CD14-positive monocyte (primary cell): ENCODE measurements at regions of chr20 and their contacts with region 1.

Region 1: DNA sequence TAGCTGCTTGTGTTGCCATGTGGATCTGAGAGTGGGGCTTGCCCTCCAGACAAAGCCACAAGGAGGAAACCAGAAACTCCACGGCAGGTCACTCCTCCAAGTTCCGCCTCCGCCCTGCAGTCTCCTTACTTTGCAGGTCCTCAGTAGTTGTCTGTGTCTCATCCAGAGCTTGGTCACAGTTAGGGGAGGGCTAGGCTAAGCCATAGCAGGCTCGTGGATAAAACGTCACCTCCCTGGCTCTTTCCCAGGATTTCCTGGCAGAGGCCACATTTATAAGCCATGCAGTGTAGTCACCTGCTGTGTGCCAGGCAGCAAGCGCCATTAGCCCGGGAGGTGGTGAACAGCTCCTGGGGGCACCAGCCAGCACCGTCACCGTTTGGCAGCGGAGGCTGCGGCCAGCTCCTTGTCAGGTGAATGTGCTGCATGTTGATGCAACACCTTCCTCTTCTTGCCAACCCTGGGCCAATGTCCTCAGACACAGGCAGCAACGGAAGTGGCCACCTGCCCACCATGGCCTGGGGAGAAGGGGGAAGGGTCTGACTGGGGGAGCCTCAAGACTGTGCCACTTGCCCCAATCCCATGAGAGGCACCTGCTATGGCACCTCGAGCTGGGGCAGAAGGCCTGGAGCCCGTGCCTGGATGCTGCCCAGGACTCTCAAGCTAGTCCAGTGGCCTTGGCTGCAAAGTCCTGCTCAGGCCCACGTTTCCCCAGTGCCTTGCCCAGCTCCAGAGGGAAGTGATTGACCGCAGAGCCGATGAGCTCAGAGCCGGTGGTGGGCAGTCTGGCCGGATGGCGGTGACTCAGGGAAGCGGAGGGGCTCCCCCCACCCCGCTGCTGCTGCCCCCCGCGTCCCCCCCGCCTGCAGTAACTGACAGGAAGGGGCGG is 39.0 kb upstream of the SLCO4A1 start:
- DNase-seq: peak; percentile 96 to 98 (median 96)
- H3K4me3 ChIP-seq: peak overlapping the region in 2 of 3 experiments; percentile 14 to 65
- H3K4me3 Mint-ChIP-seq: peak overlapping the region; percentile 69 to 89
- H3K27ac ChIP-seq: peak overlapping the region; percentile 96 to 99
- H3K27ac Mint-ChIP-seq: peak overlapping the region; percentile 97 to 99 (median 98)
- H3K4me1 ChIP-seq: peaks cover 86 to 96% of the 10 kb centered on the region in 2 donors
- H3K4me1 Mint-ChIP-seq: peaks cover 90% of the 10 kb centered on the region
- H3K27me3 ChIP-seq: no peaks in the 10 kb centered on the region
- H3K27me3 Mint-ChIP-seq: peaks cover 0 to 4% (median 0%) of the 10 kb centered on the region in 3 donors
- CTCF ChIP-seq: no peak

Region 2: DNA sequence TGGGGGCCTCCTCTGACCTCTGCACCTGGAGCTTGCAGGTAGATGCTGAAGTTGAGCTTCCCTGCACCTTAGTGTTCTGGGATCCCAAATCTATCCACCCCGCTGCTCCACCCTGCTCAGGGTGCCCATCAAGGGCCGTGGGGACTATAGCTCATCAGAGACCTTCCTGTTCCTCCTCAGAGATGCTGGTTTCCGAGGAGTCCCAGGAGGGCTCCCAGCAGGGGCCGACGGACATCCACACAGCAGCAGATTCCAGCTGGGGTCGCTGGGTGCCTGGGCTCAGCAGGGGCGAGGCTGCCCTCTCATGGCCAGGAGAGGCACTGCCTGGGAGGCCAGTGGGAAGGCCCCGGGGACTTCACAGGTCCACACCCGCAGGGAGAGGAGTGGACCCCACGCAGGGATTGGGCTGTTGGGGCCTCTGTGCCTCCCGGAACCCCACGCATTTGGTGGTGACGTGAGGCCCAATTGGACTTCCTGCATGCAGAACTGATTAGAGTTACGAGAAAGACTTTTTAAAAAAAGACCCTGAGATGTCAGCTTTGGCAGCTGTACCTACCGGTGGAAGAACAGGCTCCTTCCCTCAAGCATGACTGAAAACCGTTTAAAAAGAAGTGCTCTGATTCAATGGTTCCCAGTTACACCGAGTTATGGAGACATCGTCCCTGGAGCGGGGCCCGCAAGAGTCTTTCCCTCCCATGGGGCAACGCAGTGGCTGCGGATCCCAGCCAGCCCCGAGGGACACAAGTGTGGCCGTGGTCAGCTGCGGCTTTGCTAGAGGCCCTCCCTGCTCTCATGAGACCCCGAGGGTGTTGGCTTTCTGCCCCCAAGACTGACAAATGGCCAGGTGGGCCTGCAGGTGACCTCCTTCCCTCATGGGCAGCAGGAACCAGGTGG is 13.7 kb after region 1 on chr20:
- intact Hi-C with region 1: loop called in 1 of 2 experiments (anchors 2 kb)
- DNase-seq: peak; percentile 73 to 85 (median 83)
- H3K4me3 ChIP-seq: peak overlapping the region in 1 of 3 experiments; percentile 34
- H3K4me3 Mint-ChIP-seq: peak overlapping the region in 1 of 2 donors; percentile 71
- H3K27ac ChIP-seq: peak overlapping the region; percentile 93
- H3K27ac Mint-ChIP-seq: peak overlapping the region; percentile 94 to 98 (median 95)
- H3K4me1 ChIP-seq: peaks cover 31 to 34% of the 10 kb centered on the region in 2 donors
- H3K4me1 Mint-ChIP-seq: peaks cover 35% of the 10 kb centered on the region
- H3K27me3 ChIP-seq: no peaks in the 10 kb centered on the region
- H3K27me3 Mint-ChIP-seq: peaks cover 0 to 1% (median 0%) of the 10 kb centered on the region in 3 donors
- CTCF ChIP-seq: peak; percentile 97

Region 3: DNA sequence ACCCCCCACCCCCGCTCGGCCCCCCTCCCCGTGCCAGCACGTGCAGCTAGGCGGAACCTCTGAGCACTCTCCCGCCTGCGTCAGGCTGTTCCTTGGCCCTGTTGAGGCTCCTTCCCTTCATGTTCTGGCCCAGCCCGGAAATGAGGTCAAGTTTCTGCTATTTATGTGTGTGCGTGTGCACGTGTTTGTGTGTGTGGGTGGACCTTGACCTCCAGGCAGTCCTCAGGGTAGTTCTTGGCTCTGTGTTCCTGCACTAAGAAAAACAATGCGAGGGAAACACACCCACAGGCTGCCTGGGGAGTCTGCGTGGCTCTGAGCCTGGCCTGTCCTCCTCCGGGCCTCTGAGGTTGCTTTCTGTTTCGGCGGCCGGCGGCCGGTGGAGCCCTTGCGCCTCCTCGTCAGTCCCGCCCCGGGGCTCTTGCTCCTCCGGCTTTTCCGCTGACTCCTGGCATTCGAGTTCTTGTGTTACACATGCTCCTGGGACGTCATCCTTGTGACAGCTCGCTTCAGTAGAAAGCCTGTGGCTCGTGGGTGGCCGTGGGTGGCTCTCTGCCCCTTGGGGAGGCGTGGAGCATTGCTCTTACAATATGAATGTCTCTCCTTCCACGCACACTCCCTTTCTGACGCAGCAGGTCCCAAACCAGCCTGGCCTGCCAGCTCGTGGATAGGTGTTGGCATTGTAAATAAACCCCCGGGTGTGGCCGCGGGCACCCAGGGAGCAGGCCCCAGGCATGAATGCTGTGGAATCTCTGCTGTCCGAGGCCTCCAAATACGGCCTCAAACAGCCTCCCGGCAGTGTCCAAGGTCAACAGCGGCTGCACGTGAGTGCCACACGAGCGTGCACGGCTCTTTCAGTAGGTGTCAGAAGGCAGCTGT is 49.0 kb after region 1 on chr20:
- intact Hi-C with region 1: loop called in 1 of 2 experiments (anchors 10 kb)
- DNase-seq: peak; percentile 89 to 95 (median 93)
- H3K4me3 ChIP-seq: peak overlapping the region in 2 of 3 experiments; percentile 15 to 57
- H3K4me3 Mint-ChIP-seq: peak overlapping the region; percentile 59 to 82
- H3K27ac ChIP-seq: peak overlapping the region; percentile 94 to 96
- H3K27ac Mint-ChIP-seq: peak overlapping the region; percentile 95 to 98 (median 97)
- H3K4me1 ChIP-seq: peaks cover 24 to 29% of the 10 kb centered on the region in 2 donors
- H3K4me1 Mint-ChIP-seq: peaks cover 30% of the 10 kb centered on the region
- H3K27me3 ChIP-seq: no peaks in the 10 kb centered on the region
- H3K27me3 Mint-ChIP-seq: peaks cover 0 to 9% (median 2%) of the 10 kb centered on the region in 3 donors
- CTCF ChIP-seq: peak; percentile 27

Region 4: DNA sequence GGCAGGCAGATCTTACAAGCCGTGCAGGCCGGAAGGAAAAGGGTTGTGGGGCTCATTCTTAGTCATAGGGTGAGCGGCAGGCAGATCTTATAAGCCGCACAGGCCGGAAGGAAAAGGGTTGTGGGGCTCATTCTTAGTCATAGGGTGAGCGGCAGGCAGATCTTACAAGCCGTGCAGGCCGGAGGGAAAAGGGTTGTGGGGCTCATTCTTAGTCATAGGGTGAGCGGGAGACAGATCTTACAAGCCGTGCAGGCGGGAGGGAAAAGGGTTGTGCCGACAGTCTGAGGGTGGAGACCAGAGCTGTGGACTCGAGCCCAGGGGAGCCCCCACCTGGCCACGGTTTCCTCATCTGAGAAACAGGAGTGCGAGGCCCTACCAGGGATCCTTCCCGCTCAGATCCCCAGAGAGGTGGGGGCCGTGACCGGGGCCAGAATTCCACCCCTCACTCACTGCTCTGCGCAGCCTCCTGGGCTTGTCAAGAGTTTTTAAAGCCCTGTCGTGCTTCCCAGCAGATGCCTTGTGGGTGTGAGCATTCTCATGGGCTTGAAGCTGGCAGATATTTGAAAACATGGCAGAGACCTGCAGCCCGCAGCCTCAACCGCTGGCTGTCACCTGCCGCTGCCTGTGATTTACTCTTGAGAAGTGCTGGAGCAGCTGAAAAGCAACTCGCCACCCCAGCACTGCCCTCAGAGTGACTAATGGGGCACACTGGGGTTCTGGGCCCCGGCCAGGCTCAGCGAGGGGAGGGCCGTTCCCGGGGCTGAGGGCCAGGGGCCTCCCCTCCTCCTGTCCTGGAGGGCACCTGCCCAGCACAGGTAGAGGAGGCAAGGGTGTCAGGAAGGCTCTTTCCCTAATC is 137.2 kb after region 1 on chr20:
- intact Hi-C with region 1: loop called in 1 of 2 experiments (anchors 1 kb)
- DNase-seq: peak; percentile 92 to 99 (median 96)
- H3K4me3 ChIP-seq: peak overlapping the region in 2 of 3 experiments; percentile 10 to 72
- H3K4me3 Mint-ChIP-seq: peak overlapping the region; percentile 68 to 77
- H3K27ac ChIP-seq: peak overlapping the region; percentile 93 to 99
- H3K27ac Mint-ChIP-seq: peak overlapping the region; percentile 94 to 99 (median 97)
- H3K4me1 ChIP-seq: peaks cover 41 to 65% of the 10 kb centered on the region in 2 donors
- H3K4me1 Mint-ChIP-seq: peaks cover 57% of the 10 kb centered on the region
- H3K27me3 ChIP-seq: no peaks in the 10 kb centered on the region
- H3K27me3 Mint-ChIP-seq: peaks cover 1 to 7% (median 2%) of the 10 kb centered on the region in 3 donors
- CTCF ChIP-seq: no peak

Region 5: DNA sequence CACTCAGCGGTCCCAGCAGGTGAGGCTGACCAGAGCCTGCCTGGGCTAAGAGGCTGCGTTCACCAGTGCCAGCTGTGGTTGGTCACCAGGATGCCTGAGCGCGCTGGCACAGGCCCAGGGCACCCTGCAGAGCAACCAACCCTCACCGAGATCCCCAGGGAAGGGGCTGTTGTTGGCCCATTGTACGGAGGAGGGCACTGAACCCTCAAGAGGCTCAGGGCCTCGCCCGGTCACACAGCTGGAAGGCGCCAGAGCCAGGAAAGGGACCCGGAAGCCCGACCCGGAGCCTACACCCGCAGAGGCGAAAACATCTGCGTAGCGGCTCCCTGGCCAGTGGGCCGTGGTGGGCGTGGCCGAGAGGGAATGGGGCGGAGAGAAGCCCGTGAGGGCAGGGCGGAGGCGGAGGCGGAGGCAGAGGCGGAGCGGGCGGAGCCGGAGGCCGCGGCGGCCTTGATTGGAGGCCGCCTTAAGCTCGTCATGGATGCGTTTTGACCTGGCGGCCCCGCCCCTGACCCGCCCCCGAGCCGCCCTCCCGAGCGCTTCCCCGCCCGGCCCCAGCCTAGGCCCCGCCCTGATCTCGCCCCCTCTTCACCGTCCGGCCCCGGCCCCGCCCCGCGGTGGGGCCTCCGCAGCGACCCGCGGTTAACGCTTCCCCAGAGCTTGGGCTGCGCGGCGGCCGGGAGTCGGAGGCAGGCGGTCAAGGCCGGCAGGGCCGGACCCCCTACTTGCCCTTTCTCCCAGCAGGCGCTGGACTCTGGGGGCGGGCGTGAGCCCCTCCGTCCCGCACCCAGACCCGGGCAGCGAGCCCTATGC is 190.9 kb after region 1 on chr20:
- intact Hi-C with region 1: loop called in 1 of 2 experiments (anchors 5 kb)
- DNase-seq: peak; percentile 94 to 97 (median 95)
- H3K4me3 ChIP-seq: peak overlapping the region; percentile 54 to 88 (median 59)
- H3K4me3 Mint-ChIP-seq: peak overlapping the region; percentile 82 to 87
- H3K27ac ChIP-seq: peak overlapping the region; percentile 92 to 94
- H3K27ac Mint-ChIP-seq: peak overlapping the region; percentile 92 to 99 (median 94)
- H3K4me1 ChIP-seq: peaks cover 44 to 54% of the 10 kb centered on the region in 2 donors
- H3K4me1 Mint-ChIP-seq: peaks cover 44% of the 10 kb centered on the region
- H3K27me3 ChIP-seq: no peaks in the 10 kb centered on the region
- H3K27me3 Mint-ChIP-seq: peaks cover 0 to 1% (median under 1%) of the 10 kb centered on the region in 3 donors
- CTCF ChIP-seq: no peak

Region 6: GRCh38 chr20:62861726-62862336 is 258.6 kb after region 1 on chr20 and contains the start of gene TCFL5:
- intact Hi-C with region 1: loop called in 1 of 2 experiments (anchors 5 kb)
- DNase-seq: peak; percentile 84 to 92 (median 84)
- H3K4me3 ChIP-seq: peak within 1 kb of the TSS in 2 of 3 experiments; percentile 24 to 59
- H3K4me3 Mint-ChIP-seq: peak within 1 kb of the TSS; percentile 69 to 82
- H3K27ac ChIP-seq: no peak within 1 kb of the TSS
- H3K27ac Mint-ChIP-seq: peak within 1 kb of the TSS in 3 of 7 donors; percentile 23 to 66 (median 30)
- H3K4me1 ChIP-seq: peaks cover 10 to 13% of the 10 kb centered on the region in 2 donors
- H3K4me1 Mint-ChIP-seq: peaks cover 15% of the 10 kb centered on the region
- H3K27me3 ChIP-seq: peaks cover 8 to 12% of the 10 kb centered on the region in 2 donors
- H3K27me3 Mint-ChIP-seq: peaks cover 20 to 28% (median 27%) of the 10 kb centered on the region in 3 donors
- CTCF ChIP-seq: no peak
- polyA plus RNA-seq, gene TCFL5: 0.38 to 3.5 (median 0.89) TPM

Region 7: GRCh38 chr20:63394069-63394919 is 791.0 kb after region 1 on chr20:
- intact Hi-C with region 1: no loop called
- DNase-seq: no peak
- H3K4me3 ChIP-seq: no peak overlapping the region
- H3K4me3 Mint-ChIP-seq: no peak overlapping the region
- H3K27ac ChIP-seq: no peak overlapping the region
- H3K27ac Mint-ChIP-seq: no peak overlapping the region
- H3K4me1 ChIP-seq: no peaks in the 10 kb centered on the region
- H3K4me1 Mint-ChIP-seq: no peaks in the 10 kb centered on the region
- H3K27me3 ChIP-seq: no peaks in the 10 kb centered on the region
- H3K27me3 Mint-ChIP-seq: peaks cover 2 to 16% (median 15%) of the 10 kb centered on the region in 3 donors
- CTCF ChIP-seq: no peak